GM18951 (cell line): ENCODE measurements at regions of chr20 and their contacts with region 1.

Region 1: DNA sequence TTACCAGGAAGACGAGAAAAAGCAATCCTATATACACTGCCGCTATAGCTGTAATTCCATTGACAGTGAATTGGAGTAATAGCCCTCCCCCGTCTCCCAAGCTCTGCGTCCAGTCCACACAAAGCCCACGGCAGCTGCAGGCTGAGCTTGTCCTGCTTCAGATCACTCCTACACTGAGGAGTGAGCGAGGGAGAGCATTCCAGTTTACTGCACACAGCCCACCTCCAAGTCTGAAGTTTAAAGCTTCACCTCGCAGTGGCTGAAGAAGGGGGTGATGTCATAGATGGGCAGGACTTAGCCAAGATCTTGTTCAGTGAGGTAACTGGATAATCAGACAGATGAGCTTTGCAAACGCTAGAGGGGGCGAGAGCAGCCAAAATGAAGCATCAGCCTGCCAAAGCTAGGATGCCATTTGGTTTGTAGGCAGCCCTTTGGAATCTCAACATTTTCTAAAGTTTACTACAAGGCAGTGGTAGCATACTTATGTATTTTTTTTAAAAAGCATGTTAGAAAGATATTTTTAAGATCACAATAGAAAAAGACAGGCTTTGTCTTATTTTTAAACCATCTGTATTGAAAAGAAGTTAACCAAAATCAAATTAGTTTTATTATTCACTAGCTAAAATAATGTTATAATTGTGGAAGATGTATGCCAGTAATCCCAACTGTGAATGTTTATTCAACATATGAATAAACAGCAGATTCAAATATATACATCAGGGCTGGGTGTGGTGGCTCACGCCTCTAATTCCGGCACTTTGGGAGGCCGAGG is at the start of gene FLRT3:
- POLR2A ChIP-seq: no peak

Region 2: DNA sequence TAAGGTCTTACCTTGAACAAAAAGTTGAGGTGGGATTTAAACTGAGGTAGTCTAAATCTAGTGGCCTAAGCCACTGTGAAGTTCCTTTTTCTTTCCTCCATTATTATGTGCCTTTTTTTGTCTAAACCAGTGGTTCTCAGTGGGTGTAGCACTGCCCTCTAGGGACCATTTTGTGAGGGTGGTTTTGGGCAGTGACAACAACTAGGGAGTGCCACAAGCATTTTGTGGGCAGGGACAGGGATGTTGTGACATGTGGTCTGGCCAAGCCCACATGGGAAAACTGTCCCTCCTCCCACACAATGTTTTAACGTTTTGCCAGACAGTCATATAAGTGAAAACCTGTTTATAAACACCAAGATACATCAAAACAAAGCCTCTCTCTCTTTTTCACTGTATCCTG is 899.2 kb after region 1 on chr20:
- in situ Hi-C with region 1: loop called (anchors 10 kb)
- POLR2A ChIP-seq: no peak

Region 3: GRCh38 chr20:15654208-15654645 is 1316.6 kb after region 1 on chr20:
- in situ Hi-C with region 1: loop called (anchors 25 kb)
- POLR2A ChIP-seq: no peak